ENCODE measurements at regions of chr20 and their contacts with region 1.

Region 1: DNA sequence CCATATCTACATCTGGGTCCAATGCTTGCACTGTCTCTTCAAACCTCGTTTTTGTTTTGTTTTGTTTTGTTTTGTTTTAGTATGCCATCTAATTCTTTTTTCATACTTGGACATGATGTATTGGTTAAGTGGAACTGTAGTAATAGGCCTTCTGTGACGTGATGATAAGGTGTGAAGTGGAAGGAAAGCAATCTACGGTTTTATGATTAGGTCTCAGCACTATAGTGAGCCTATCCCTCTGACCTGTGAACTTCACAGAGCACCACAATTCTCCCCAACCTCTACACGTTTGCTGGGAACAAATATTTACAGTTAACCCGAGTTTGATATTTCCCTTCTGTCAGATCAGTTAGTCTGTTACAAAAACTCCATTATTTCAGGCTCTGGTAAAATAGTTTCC is 19.1 kb upstream of the SLC24A3 start:
- DNase-seq: no peak

Region 2: GRCh38 chr20:18628330-18628920 is 564.9 kb before region 1 on chr20:
- intact Hi-C with region 1: loop called in 1 of 2 experiments (anchors 10 kb)
- DNase-seq: no peak

Region 3: DNA sequence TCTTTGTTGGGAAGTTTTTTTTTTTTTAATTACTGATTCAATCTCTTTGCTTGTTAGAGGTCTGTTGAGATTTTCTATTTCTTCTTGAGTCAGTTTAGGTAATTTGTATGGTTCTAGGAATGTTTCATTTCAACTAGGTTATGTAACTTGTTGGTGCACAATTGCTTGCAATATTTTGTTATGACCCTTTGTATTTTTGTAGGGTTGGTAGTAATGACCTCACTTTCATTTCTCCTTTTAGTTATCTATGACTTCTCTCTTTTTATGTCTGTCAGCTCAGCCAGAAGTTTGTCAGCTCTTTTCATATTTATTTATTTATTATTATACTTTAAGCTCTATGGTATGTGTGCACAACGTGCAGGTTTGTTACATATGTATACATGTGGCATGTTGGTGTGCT is 32.0 kb before region 1 on chr20:
- intact Hi-C with region 1: loop called in 1 of 2 experiments (anchors 2 kb)
- DNase-seq: no peak

Region 4: DNA sequence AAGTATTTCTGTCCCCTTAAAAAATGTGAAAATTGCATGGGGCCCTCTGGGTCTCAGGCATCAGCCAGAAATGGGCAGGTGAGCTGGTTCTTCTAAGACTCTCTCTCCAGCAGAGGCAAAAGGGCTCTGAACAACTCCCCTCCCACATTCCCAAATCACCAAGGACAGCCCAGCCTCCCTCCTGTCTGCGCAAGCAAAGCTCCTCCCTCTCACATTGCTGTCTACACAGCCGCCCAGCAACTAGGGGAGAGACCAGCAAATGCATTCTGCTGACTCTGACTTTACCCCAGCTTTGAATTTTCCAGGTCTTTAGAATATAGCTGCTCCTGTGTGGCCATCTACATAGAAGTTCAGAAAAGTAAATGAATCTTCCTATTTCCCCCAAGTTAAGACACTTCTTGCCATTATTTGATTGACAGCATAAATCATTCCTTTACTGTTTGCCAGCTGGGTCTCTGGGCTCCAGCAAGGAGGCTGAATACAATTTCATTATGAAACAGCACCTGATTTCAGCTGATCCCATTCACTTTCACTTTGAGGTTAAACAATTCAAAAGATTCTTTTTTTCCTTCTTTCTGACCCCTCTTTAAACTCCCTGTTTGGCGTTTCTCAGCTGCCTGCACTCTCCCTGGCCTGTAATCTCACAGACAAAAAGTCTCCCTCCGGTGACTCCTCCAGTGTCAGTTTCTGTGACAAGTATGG is 358.9 kb after region 1 on chr20:
- intact Hi-C with region 1: no loop called
- DNase-seq: no peak